Spleen (tissue), 13 donors: ENCODE measurements at regions of chr9 and their contacts with region 1.

Region 1: DNA sequence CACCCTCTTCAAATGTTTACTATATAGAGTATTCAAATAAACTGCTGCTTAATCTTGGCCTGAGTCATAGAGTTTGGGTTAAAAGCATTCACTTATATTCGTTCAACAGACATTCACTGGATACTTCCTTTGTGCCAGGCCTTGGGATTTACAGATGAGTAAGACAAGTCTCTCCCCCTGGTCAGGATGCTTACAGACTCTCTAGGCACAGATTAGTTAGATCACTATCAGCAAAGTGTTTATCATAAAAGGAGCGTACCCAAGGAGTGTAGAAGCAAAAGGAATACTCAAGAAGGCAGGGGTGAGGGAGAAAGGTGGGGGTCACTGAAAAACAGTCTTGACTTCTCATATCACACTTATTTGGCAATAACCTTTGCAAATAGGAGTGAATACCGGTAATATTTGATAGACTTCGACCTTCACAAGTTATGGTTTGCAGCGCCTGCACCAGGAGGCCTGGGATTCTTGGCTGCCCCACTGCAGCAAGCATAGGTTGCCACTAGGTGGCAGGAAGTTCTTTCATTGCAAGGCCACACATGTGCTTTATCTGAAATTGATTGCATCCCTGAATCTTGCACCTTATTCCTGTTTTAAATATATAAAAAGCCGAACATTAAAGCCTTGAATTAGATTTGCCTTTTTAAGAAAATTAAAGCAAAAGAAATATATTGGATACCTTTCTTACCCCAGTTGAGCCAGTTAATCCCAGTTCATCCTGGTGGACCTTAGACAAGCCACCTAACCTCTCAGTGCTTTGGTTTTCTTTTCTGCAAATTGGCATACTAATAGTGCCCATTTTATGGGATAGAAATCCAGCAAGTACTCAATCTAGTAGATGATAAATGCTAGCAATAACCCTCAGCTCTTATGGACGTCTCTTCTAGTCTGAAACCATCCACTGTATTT is 6.5 kb upstream of the TRMT10B start:
- DNase-seq: no peak
- H3K4me3 ChIP-seq: no peak overlapping the region
- H3K27ac ChIP-seq: no peak overlapping the region
- H3K4me1 ChIP-seq: peaks cover 0 to 4% (median 0%) of the 10 kb centered on the region in 6 donors
- H3K27me3 ChIP-seq: no peaks in the 10 kb centered on the region
- CTCF ChIP-seq: peak; percentile 56 to 95 (median 91)
- POLR2A ChIP-seq: no peak

Region 2: DNA sequence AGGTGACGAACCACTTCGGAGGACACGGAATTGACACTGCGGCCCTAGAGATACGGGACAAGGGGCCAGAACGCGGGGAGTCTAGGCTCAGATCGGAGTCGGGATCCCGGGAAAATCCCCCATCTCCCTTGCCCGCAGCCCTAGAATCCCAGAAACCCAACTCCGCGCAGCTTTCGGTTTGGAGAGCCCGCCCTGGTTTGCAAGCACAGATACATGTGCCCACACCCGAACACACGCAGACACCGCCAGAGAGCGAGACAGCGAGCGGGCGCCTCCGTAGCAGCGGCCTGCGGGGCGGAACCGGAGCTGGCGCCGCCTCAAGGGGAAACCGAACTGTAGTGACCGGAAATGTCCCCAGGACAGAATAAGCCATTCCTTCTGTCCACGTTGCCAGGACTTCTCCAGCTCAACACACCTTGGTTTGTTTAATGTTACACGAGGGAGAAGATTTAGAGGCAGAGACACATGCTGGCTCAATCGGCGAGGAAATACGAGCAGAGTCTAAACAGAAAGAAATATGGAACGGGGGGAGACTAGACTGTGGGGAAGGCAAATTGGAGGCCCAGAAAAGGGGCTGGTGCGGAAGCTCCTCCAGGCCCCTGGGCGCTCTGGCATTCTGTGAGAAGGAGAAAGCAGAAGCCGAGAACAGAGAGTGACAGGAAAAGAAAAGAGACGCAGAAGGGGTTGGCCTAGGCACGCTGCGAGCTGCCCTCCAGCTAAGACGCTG is 710.2 kb before region 1 on chr9:
- intact Hi-C with region 1: no loop called
- DNase-seq: peak; percentile 91
- H3K4me3 ChIP-seq: peak overlapping the region; percentile 24 to 73 (median 52)
- H3K27ac ChIP-seq: peak overlapping the region; percentile 69 to 91 (median 88)
- H3K4me1 ChIP-seq: peaks cover 9 to 74% (median 44%) of the 10 kb centered on the region in 6 donors
- H3K27me3 ChIP-seq: peaks cover 8 to 97% (median 77%) of the 10 kb centered on the region in 7 donors
- CTCF ChIP-seq: no peak
- POLR2A ChIP-seq: peak in 1 of 3 donors; percentile 44

Region 3: DNA sequence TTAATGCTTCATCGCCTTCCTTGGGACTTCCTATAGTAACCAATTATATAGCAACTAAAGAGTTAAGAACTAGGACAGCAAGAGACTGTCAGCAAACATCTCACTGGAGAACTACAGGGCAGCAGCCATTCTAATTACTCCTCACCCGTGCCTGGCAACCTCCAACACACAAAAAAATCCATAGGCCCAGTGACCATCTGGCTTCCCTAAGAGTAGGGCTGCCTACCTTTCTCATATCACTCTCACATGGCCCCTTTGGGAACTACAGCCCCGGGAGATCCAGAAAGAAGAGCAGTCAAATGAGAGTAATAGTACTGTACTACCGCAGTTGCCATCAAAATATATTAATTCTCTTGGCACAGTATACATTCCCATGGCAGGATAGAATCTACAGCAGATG is 59.2 kb after region 1 on chr9:
- intact Hi-C with region 1: no loop called
- DNase-seq: no peak
- H3K4me3 ChIP-seq: no peak overlapping the region
- H3K27ac ChIP-seq: no peak overlapping the region
- H3K4me1 ChIP-seq: peaks cover 22 to 59% (median 36%) of the 10 kb centered on the region in 6 donors
- H3K27me3 ChIP-seq: no peaks in the 10 kb centered on the region
- CTCF ChIP-seq: no peak
- POLR2A ChIP-seq: no peak

Region 4: GRCh38 chr9:38408719-38409118 is 661.6 kb after region 1 on chr9:
- intact Hi-C with region 1: loop called (anchors 10 kb)
- DNase-seq: no peak
- H3K4me3 ChIP-seq: no peak overlapping the region
- H3K27ac ChIP-seq: no peak overlapping the region
- H3K4me1 ChIP-seq: no peaks in the 10 kb centered on the region
- H3K27me3 ChIP-seq: peaks cover 0 to 33% (median 0%) of the 10 kb centered on the region in 7 donors
- CTCF ChIP-seq: no peak
- POLR2A ChIP-seq: no peak